Thyroid gland (tissue), 4 donors: ENCODE measurements at regions of chr11 and their contacts with region 1.

Region 1: GRCh38 chr11:118689851-118690552 is 10.6 kb upstream of the TREH start:
- DNase-seq: peak; percentile 96 to 98
- H3K4me3 ChIP-seq: no peak overlapping the region
- H3K27ac ChIP-seq: peak overlapping the region; percentile 53 to 79 (median 76)
- H3K4me1 ChIP-seq: peaks cover 5 to 13% of the 10 kb centered on the region in 2 donors
- H3K27me3 ChIP-seq: no peaks in the 10 kb centered on the region
- CTCF ChIP-seq: peak; percentile 78 to 96 (median 93)
- POLR2A ChIP-seq: peak in 1 of 2 donors; percentile 28

Region 2: GRCh38 chr11:118771547-118772288 is 81.7 kb after region 1 on chr11:
- intact Hi-C with region 1: loop called (anchors 10 kb)
- DNase-seq: no peak
- H3K4me3 ChIP-seq: no peak overlapping the region
- H3K27ac ChIP-seq: peak overlapping the region in 1 of 3 donors; percentile 1
- H3K4me1 ChIP-seq: peaks cover 42% of the 10 kb centered on the region in 2 donors
- H3K27me3 ChIP-seq: no peaks in the 10 kb centered on the region
- CTCF ChIP-seq: no peak
- POLR2A ChIP-seq: no peak

Region 3: DNA sequence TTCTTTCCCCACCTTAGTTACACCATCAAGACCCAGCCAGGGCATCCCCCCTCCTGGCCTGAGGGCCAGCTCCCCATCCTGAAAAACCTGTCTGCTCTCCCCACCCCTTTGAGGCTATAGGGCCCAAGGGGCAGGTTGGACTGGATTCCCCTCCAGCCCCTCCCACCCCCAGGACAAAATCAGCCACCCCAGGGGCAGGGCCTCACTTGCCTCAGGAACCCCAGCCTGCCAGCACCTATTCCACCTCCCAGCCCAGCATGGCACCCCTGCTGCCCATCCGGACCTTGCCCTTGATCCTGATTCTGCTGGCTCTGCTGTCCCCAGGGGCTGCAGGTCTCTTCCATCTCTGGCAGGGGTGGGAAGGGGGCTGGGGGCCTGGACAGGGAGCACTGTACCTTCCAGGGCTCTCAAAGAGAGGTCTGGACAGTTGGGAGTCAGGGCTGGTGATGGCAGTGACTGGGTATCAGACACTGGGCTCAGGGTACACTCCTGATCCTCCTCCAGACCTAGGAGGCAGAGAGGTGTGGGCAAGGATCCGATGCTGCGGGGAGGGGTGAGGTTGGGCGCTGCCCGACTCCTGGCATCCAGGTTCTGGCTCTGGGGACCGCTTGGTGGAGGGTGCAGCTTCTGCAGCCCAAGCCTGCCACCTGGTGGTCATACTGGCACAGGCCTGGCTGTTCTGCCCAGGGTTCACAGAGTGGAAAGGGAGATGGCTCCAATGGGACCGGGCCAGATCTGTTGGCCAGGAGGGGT is 266.3 kb after region 1 on chr11 and contains the start of gene UPK2:
- intact Hi-C with region 1: loop called (anchors 5 kb)
- DNase-seq: peak; percentile 90 to 92
- H3K4me3 ChIP-seq: no peak within 1 kb of the TSS
- H3K27ac ChIP-seq: no peak within 1 kb of the TSS
- H3K4me1 ChIP-seq: no peaks in the 10 kb centered on the region
- H3K27me3 ChIP-seq: no peaks in the 10 kb centered on the region
- CTCF ChIP-seq: peak; percentile 88 to 98 (median 94)
- POLR2A ChIP-seq: no peak
- total RNA-seq, gene UPK2: not detected